Activated T-helper 2 cell treated with anti-CD3 and anti-CD28 coated beads, Interferon-gamma antibody, Interleukin-2, Interleukin-4, amounts not matched to agents 10 μg/mL and 5 μg/mL and 100 μg/mL, durations not matched to agents 14 hours and 24 hours and 36 hours (primary cell): ENCODE measurements at regions of chr12 and their contacts with region 1.

Region 1: DNA sequence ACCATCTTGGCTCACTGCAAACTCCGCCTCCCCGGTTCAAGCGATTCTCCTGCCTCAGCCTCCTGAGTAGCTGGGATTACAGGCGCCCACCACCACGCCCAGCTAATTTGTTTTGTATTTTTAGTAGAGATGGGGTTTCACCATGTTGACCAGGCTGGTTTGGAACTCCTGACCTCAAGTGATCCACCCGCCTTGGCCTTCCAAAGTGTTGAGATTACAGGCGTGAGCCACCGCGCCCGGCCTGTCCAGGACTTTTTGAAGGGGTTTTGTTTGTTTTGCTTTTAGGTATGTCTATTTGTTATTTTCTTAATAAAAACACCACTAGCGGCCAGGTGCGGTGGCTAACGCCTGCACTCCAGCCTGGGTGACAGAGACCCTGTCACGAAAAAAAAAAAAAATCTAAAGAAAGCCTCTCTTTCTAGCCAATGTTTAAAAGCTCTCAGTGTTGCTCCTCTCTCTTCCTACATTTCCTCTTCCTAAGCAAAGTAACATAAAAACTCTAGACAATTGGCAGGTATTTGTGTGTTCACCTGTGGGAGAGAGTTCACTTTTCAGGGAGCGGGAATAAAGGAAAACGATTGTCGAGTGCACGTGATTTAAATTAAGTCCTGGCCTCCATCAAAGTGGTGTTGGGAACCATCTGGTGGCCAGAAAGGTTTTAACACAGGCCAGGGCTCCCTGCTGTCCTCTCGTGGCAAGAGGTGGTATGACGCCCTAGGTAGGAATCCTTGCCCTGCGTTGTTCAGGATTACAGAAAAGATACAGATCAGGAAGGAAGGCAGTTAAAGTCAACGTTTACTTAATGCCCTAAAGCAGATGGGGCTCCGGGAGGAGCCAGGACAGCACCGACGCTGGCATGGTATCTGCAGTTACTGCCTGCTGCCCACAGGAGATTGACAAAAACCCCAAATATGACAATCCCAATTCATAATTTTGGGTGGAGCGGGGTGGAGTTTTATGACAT is 36.2 kb upstream of the ATP23 start:
- DNase-seq: peak; percentile 70
- H3K4me3 Mint-ChIP-seq: peak overlapping the region; percentile 20
- H3K27ac Mint-ChIP-seq: no peak overlapping the region
- H3K4me1 Mint-ChIP-seq: peaks cover 5% of the 10 kb centered on the region
- H3K27me3 Mint-ChIP-seq: peaks cover 36% of the 10 kb centered on the region

Region 2: GRCh38 chr12:57751788-57752667 is 153.1 kb before region 1 on chr12 and contains the start of gene CDK4:
- intact Hi-C with region 1: loop called (anchors 5 kb)
- DNase-seq: peak; percentile 99
- H3K4me3 Mint-ChIP-seq: peak within 1 kb of the TSS; percentile 94
- H3K27ac Mint-ChIP-seq: peak within 1 kb of the TSS; percentile 92
- H3K4me1 Mint-ChIP-seq: peaks cover 50% of the 10 kb centered on the region
- H3K27me3 Mint-ChIP-seq: peaks cover 2% of the 10 kb centered on the region
- total RNA-seq, gene CDK4: 180 and 201 TPM in 2 replicates

Region 3: DNA sequence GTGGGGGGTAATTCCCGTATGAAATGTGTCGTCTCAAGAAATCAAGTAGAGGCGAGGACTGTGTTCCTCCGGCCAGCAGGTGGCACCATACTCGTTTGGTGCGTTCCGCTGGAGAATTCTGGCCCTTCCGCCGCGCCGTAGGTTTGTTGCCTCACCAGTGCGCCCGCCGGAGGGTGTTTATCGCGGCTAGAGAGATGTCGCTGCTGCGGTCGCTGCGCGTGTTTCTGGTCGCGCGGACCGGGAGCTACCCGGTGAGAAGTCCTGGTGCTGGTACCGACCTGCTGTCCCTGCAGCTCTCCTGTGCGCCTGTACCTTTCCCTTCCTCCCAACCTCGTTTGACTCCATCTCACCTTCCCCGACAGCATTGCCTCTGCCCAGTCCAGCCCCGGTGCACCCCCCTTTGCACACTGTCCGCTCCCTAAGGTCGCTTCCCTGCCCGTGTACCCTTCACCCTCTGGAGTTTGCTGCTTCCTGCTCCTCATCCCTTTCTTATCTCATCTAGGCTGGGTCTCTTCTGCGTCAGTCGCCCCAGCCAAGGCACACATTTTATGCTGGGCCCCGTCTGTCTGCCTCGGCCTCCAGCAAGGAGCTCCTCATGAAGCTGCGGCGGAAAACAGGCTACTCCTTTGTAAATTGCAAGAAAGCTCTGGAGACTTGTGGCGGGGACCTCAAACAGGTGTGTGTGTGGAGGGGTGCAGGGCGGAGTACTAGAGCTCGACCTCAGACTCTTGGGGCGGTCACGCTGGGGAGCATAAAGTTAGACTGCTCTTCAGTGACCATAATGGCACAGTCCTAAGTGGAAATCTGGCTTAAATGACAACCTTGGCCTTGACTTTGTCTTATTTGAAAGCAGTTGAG is 122.3 kb before region 1 on chr12 and contains the start of gene TSFM:
- intact Hi-C with region 1: loop called (anchors 2 kb)
- DNase-seq: peak; percentile 94
- H3K4me3 Mint-ChIP-seq: peak within 1 kb of the TSS; percentile 98
- H3K27ac Mint-ChIP-seq: peak within 1 kb of the TSS; percentile 95
- H3K4me1 Mint-ChIP-seq: peaks cover 21% of the 10 kb centered on the region
- H3K27me3 Mint-ChIP-seq: no peaks in the 10 kb centered on the region
- total RNA-seq, gene TSFM: 44.9 and 52.7 TPM in 2 replicates

Region 4: GRCh38 chr12:57803319-57803893 is 101.7 kb before region 1 on chr12:
- intact Hi-C with region 1: loop called (anchors 1 kb)
- DNase-seq: no peak
- H3K4me3 Mint-ChIP-seq: no peak overlapping the region
- H3K27ac Mint-ChIP-seq: no peak overlapping the region
- H3K4me1 Mint-ChIP-seq: no peaks in the 10 kb centered on the region
- H3K27me3 Mint-ChIP-seq: no peaks in the 10 kb centered on the region

Region 5: GRCh38 chr12:57836442-57837375 is 68.4 kb before region 1 on chr12:
- intact Hi-C with region 1: loop called (anchors 1 kb)
- DNase-seq: peak; percentile 32
- H3K4me3 Mint-ChIP-seq: peak overlapping the region; percentile 26
- H3K27ac Mint-ChIP-seq: peak overlapping the region; percentile 77
- H3K4me1 Mint-ChIP-seq: peaks cover 67% of the 10 kb centered on the region
- H3K27me3 Mint-ChIP-seq: no peaks in the 10 kb centered on the region

Region 6: GRCh38 chr12:57941165-57941894 is 36.2 kb after region 1 on chr12 and contains the start of gene ATP23:
- intact Hi-C with region 1: loop called (anchors 1 kb)
- DNase-seq: peak; percentile 90
- H3K4me3 Mint-ChIP-seq: peak within 1 kb of the TSS; percentile 89
- H3K27ac Mint-ChIP-seq: peak within 1 kb of the TSS; percentile 97
- H3K4me1 Mint-ChIP-seq: peaks cover 40% of the 10 kb centered on the region
- H3K27me3 Mint-ChIP-seq: no peaks in the 10 kb centered on the region
- total RNA-seq, gene ATP23: 10.8 and 12.7 TPM in 2 replicates